Psoas muscle (tissue), 8 donors: ENCODE measurements at regions of chr3 and their contacts with region 1.

Region 1: GRCh38 chr3:119630128-119630879 is 30.1 kb downstream of the POPDC2 start:
- DNase-seq: peak; percentile 50 to 74
- ATAC-seq: peak; percentile 80 to 89 (median 85)
- H3K4me3 ChIP-seq: peak overlapping the region; percentile 10
- H3K27ac ChIP-seq: peak overlapping the region; percentile 93
- H3K4me1 ChIP-seq: peaks cover 62% of the 10 kb centered on the region
- H3K27me3 ChIP-seq: no peaks in the 10 kb centered on the region
- CTCF ChIP-seq: no peak

Region 2: DNA sequence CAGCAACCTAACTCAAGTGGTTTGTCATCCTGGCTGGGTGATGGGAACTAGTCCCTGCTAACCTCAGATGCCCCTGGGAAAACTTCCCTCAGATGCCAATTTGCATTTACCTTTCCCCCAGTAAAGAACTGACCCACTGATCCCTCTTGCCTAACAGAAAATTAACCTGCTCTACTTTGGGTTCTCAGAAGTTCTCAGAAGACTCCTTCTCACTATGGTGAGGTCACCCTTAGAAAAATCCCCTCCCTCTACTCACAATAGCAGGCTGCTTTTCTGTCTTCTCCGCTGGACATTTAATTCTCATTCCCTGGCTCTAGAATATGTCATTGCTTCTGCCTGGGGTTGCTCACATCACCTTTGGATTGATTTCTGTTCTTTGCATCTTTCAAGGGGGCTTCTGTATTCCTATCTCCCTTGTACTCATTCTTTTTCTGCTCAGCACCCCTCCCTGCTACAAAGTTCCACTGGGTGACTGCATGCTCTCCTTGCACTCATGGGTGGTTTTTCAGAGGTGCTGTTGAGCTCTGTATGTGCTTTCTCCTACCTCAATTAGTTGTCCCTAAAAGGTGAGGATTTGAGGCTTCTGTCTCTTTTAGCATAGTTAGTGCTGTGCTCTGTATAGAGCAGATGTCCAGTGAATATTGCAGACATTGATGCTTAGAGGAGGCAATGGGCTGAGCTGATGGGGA is 31.8 kb before region 1 on chr3:
- intact Hi-C with region 1: loop called (anchors 2 to 5 kb)
- DNase-seq: no peak
- ATAC-seq: no peak
- H3K4me3 ChIP-seq: peak overlapping the region; percentile 33
- H3K27ac ChIP-seq: peak overlapping the region; percentile 92
- H3K4me1 ChIP-seq: peaks cover 47% of the 10 kb centered on the region
- H3K27me3 ChIP-seq: no peaks in the 10 kb centered on the region
- CTCF ChIP-seq: no peak

Region 3: DNA sequence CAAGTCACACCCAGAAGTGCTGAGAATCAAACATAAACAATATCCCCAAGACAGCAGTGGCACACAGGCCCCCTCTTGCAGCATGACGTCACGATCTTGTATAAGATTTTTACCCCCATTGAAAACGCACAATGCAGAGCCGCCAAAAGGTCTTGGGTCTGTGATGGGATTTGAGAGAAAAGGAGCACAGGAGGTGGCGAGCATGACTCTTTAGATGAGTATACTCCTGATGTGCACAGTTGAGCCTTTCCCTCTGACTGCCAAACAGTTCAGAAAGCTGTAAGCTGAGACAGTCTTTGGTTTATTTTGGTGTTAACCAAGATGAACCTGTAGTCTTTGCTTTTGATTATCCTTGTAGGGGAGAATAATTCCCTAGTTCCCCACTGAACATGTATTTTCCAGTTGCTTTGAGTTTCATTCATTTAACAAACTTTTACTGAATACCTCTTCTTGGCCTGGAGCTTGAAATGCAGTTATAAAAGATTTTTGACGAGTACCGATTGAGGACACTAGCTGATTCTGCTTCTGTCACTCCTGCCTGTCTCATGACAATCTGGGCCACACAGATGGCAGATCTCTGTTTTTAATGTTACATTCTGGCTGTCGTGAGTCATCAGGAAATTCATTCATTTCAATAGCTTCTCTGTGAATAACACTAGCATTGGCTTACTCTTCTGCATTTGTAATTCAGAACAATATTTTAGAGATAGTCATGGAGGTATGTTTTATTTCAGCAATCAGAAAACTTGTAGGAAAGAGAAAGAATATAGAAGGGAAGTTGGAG is 101.4 kb after region 1 on chr3:
- intact Hi-C with region 1: no loop called
- DNase-seq: no peak
- ATAC-seq: peak in 3 of 4 donors; percentile 64 to 89 (median 75)
- H3K4me3 ChIP-seq: no peak overlapping the region
- H3K27ac ChIP-seq: peak overlapping the region; percentile 50
- H3K4me1 ChIP-seq: peaks cover 3% of the 10 kb centered on the region
- H3K27me3 ChIP-seq: no peaks in the 10 kb centered on the region
- CTCF ChIP-seq: no peak